ENCODE measurements at regions of chr10 and their contacts with region 1.

Region 1: GRCh38 chr10:21533467-21534279 is at the start of gene MLLT10:
- DNase-seq: peak; percentile 94
- H3K4me3 Mint-ChIP-seq: peak within 1 kb of the TSS; percentile 84
- H3K27ac Mint-ChIP-seq: peak within 1 kb of the TSS; percentile 97
- H3K4me1 Mint-ChIP-seq: peaks cover 6% of the 10 kb centered on the region
- H3K27me3 Mint-ChIP-seq: no peaks in the 10 kb centered on the region
- CTCF ChIP-seq: no peak
- total RNA-seq, gene MLLT10: 39.3 and 47.5 TPM in 2 replicates

Region 2: GRCh38 chr10:21516242-21517131 is 17.2 kb before region 1 on chr10:
- CTCF ChIA-PET with region 1: interaction called, 3 read pairs
- POLR2A ChIA-PET with region 1: interaction called, 24 read pairs
- intact Hi-C with region 1: no loop called
- DNase-seq: peak; percentile 50
- H3K4me3 Mint-ChIP-seq: peak overlapping the region; percentile 85
- H3K27ac Mint-ChIP-seq: no peak overlapping the region
- H3K4me1 Mint-ChIP-seq: peaks cover 18% of the 10 kb centered on the region
- H3K27me3 Mint-ChIP-seq: no peaks in the 10 kb centered on the region
- CTCF ChIP-seq: no peak

Region 3: DNA sequence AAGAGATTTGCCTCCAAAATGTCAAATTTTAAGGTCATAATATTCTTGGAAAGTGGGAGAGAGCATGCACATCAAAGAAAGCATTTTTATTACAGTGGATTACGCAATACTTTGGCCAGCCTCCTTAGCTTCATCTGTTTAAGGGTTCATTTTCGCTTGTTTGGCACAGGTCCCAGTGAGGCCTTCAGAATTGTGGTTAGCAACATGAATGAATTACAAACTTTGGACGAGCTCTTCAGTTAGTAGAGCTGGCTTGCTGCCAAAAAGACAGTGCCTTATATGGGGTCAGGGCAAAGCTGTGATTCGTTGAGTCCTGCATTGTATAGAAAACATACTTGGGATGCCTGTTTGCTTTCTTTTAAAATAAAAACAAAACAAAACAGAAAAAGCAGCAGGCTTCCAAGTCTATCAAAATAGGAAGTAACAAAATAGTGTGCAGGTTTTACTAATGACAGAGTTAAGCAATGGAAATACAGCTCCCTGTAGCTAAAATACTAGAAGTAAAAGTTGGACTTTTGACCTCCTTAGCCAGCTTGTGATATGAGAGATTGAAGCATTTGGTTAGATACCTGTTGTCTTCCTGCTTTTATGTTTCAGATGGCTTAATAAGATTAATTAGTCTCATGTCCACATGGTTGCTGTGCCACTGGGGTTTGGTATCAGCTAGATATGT is 191.2 kb after region 1 on chr10:
- CTCF ChIA-PET with region 1: interaction called, 3 read pairs
- POLR2A ChIA-PET with region 1: interaction called, 4 read pairs
- intact Hi-C with region 1: loop called (anchors 10 kb)
- DNase-seq: peak; percentile 100
- H3K4me3 Mint-ChIP-seq: no peak overlapping the region
- H3K27ac Mint-ChIP-seq: no peak overlapping the region
- H3K4me1 Mint-ChIP-seq: peaks cover 15% of the 10 kb centered on the region
- H3K27me3 Mint-ChIP-seq: no peaks in the 10 kb centered on the region
- CTCF ChIP-seq: no peak